Caco-2 (cell line): ENCODE measurements at regions of chr3 and their contacts with region 1.

Region 1: GRCh38 chr3:129291236-129291886 is 12.7 kb downstream of the HMCES start:
- DNase-seq: no peak
- H3K4me3 ChIP-seq: no peak overlapping the region
- H3K4me3 Mint-ChIP-seq: no peak overlapping the region
- H3K27ac Mint-ChIP-seq: no peak overlapping the region
- H3K4me1 ChIP-seq: no peaks in the 10 kb centered on the region
- H3K4me1 Mint-ChIP-seq: no peaks in the 10 kb centered on the region
- H3K27me3 ChIP-seq: no peaks in the 10 kb centered on the region
- H3K27me3 Mint-ChIP-seq: no peaks in the 10 kb centered on the region
- CTCF ChIP-seq: no peak

Region 2: GRCh38 chr3:129195731-129196256 is 95.6 kb before region 1 on chr3:
- CTCF ChIA-PET with region 1: no interaction called
- POLR2A ChIA-PET with region 1: no interaction called
- intact Hi-C with region 1: no loop called
- DNase-seq: no peak
- H3K4me3 ChIP-seq: no peak overlapping the region
- H3K4me3 Mint-ChIP-seq: no peak overlapping the region
- H3K27ac Mint-ChIP-seq: no peak overlapping the region
- H3K4me1 ChIP-seq: no peaks in the 10 kb centered on the region
- H3K4me1 Mint-ChIP-seq: no peaks in the 10 kb centered on the region
- H3K27me3 ChIP-seq: no peaks in the 10 kb centered on the region
- H3K27me3 Mint-ChIP-seq: peaks cover 1% of the 10 kb centered on the region
- CTCF ChIP-seq: no peak

Region 3: DNA sequence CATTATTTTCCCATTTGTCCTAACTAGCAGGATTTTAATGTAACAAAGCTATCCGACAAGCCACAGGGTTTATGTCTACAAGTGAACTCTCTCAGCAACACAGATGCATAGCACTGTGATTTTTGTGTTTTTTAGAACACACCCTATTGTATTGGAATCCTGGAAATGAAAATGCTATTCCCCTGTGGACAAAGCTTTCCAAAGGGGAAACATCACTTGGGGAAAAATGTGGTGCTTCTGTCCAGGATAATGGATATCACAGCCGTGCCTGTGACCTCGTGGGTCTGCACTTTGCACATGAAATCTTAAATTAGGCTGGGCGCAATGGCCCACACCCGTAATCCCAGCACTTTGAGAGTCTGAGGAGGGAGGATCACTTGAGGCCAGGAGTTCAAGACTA is 76.5 kb after region 1 on chr3:
- CTCF ChIA-PET with region 1: no interaction called
- POLR2A ChIA-PET with region 1: interaction called, 10 read pairs
- intact Hi-C with region 1: no loop called
- DNase-seq: no peak
- H3K4me3 ChIP-seq: no peak overlapping the region
- H3K4me3 Mint-ChIP-seq: no peak overlapping the region
- H3K27ac Mint-ChIP-seq: no peak overlapping the region
- H3K4me1 ChIP-seq: no peaks in the 10 kb centered on the region
- H3K4me1 Mint-ChIP-seq: no peaks in the 10 kb centered on the region
- H3K27me3 ChIP-seq: no peaks in the 10 kb centered on the region; the same call in 1 of the 2 replicates
- H3K27me3 Mint-ChIP-seq: no peaks in the 10 kb centered on the region
- CTCF ChIP-seq: no peak